ENCODE measurements at regions of chr7 and their contacts with region 1.

Region 1: DNA sequence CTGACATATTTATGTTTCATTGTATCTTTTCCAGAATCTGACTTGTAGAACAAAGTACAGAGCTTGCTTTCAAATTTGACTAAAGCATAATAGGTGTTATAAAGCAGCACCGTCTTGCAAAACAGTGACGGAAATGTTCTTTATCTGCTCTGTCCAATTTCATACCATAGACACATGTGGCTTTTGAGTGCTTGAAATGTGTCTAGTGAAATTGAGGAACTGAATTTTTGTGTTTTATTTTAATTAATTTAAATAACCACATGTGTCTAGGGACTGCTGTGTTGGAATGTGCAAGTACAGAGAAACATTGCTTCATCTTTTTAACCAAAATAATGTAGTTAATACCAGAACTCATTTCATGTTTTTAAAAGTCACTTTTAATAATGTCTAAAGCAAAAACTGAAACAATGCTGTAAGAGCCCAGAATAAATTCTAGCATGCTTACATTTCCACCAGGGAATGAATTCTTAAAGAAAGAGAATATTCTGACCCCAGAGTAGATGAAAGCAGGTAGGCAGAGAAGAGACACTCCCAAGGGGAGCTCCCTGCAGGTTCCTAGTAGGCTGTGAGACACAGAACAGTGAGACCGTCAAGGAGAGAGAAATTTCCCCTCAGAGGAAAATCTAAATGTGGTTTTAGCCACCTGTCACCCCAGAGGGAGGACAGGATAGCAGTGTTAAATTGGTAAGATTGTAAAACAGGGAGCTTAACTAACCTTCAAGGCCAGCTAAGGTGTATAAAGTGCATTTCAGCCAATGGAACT is 175.3 kb upstream of the KMT2E start:
- DNase-seq: no peak
- CTCF ChIP-seq: no peak

Region 2: DNA sequence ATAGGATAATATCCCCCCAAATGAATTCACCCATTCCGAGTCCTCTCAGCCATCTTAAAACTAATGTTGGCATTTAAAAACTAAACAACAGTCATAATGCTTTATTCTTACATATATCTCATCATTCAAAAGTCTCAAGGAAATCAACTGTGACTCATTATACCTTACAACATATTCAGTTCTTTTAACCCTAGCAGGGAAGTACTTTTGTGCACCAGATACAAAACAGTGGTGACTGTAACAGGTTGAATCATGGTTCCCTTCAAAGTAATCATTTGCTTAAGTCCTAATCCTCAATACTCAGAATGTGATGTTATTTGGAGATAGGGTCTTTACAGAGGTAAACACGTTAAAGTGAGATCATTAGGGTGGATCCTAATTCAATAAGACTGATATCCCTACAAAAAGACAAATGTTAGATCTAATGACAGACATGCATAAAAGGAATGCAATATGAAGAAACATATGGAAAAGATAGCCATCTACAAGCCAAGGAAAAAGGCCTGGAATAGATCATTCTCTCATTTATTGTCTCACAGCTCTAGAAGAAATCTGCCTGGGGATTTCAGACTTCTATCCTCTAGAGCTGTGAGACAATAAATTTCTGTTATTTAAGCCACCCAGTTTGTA is 891.6 kb before region 1 on chr7:
- CTCF ChIA-PET with region 1: no interaction called
- POLR2A ChIA-PET with region 1: no interaction called
- DNase-seq: no peak
- CTCF ChIP-seq: no peak

Region 3: DNA sequence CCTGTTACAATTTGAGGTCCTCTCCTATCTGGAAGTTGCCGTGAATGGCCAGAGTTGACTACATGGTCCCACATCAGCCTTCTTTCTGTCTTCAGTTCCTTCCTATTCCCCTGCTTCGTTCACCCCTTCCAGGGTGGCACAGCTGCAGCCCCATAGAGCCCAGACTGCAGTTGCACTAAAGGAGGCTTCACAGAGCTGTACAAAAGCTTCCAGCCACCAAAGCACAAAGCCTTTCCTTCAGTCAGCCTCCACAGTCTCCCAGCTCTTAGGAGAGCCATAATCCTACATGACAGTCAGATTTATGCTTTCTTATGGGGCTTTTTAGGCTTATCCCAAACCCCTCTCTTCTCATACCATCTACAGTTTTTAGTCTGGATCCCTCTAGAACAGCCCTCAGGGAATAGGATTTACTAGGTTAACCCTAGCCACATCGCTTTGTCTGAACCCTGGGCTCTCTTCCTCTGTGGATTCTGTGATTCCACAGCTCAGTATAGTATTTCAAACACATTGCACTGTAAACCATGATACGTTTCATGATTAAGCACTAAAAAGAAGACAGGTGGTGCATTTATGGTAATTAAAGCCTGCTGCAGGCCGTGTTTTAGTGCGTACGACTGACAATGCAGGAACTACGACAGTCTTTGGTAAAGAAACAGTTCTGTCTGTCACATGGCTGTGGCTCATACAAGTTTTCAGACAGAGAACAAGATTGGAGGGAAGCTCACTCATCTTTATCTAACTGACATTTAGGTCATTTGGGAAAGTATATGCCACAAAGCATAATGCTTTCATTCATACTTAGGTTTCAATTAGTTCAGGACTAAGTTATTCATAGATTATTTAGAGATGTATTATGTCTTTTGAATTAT is 33.0 kb before region 1 on chr7:
- CTCF ChIA-PET with region 1: no interaction called
- POLR2A ChIA-PET with region 1: no interaction called
- DNase-seq: no peak
- CTCF ChIP-seq: no peak

Region 4: GRCh38 chr7:104825099-104825498 is 13.6 kb before region 1 on chr7:
- CTCF ChIA-PET with region 1: interaction called, 20 read pairs
- POLR2A ChIA-PET with region 1: no interaction called
- DNase-seq: no peak
- CTCF ChIP-seq: no peak

Region 5: GRCh38 chr7:105060437-105060836 is 221.7 kb after region 1 on chr7:
- CTCF ChIA-PET with region 1: no interaction called
- POLR2A ChIA-PET with region 1: no interaction called
- DNase-seq: no peak
- CTCF ChIP-seq: no peak

Measured in GM10248 (cell line).